GM13977 (cell line): ENCODE measurements at regions of chr22 and their contacts with region 1.

Region 1: DNA sequence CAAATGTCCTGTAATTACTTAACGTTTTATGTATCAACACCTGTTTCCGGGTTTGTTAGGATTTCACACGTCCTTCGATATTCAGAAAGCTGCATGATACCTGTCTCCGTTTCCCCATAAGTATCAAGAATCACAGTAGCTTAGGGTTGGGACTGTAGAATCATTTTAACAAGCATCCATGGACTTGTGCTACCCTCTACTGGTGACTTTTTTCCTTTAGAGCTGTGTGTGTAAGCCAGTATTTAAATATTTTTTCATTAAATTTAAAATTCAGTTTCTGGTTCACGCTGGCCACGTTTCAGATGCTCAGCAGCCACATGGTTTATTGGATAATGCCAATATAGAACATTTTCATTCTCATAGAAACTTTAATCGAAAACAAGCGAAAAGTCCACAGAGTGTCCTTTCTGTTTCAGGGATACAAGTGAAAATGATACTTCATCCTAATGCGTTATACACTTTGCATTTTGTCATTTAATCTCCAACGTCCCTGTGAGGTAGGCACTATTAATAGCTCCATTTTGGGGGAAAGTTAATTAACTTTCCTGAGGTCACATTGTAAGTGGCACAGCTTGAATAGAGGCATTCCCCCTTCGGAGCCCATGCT is 61.5 kb upstream of the SLC25A18 start:
- DNase-seq: peak; percentile 78
- CTCF ChIP-seq: peak; percentile 59

Region 2: DNA sequence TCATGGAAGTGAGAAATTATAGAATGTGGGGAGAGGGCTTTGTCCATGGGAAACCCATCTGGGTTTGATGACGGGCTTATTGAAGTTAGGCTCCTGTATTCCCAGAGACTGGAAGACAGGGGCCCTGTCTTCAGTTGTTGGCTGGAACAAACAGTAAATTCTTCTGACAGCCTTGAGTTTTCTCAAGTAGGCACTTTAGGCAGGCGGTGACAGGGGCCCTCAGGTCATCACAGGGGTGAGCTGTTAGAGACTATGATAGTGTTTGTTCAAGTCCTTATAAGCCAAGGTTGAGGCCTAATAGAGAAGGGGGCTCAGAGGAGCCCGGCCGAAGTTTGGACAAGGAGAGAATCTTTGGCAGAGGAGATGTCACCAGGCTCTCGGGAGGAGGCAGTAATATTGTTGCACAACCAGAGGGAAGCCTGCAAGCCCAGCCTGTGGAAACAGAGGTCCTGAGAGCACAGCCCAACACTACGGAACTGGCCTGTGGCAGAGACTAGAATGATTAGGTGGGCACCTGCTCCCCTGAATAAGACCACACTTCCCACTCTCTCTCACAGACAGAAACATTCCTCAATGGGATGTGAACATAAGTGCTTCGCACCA is 437.2 kb before region 1 on chr22:
- in situ Hi-C with region 1: no loop called
- DNase-seq: no peak
- CTCF ChIP-seq: no peak

Region 3: GRCh38 chr22:17077255-17077654 is 424.5 kb before region 1 on chr22:
- in situ Hi-C with region 1: loop called (anchors 10 kb)
- DNase-seq: no peak
- CTCF ChIP-seq: no peak

Region 4: GRCh38 chr22:17754233-17754925 is 252.6 kb after region 1 on chr22:
- in situ Hi-C with region 1: no loop called
- DNase-seq: no peak
- CTCF ChIP-seq: peak; percentile 48